Activated B cell treated with CpG ODN at 0.5 μM for 24 hours (primary cell): ENCODE measurements at regions of chr6 and their contacts with region 1.

Region 1: DNA sequence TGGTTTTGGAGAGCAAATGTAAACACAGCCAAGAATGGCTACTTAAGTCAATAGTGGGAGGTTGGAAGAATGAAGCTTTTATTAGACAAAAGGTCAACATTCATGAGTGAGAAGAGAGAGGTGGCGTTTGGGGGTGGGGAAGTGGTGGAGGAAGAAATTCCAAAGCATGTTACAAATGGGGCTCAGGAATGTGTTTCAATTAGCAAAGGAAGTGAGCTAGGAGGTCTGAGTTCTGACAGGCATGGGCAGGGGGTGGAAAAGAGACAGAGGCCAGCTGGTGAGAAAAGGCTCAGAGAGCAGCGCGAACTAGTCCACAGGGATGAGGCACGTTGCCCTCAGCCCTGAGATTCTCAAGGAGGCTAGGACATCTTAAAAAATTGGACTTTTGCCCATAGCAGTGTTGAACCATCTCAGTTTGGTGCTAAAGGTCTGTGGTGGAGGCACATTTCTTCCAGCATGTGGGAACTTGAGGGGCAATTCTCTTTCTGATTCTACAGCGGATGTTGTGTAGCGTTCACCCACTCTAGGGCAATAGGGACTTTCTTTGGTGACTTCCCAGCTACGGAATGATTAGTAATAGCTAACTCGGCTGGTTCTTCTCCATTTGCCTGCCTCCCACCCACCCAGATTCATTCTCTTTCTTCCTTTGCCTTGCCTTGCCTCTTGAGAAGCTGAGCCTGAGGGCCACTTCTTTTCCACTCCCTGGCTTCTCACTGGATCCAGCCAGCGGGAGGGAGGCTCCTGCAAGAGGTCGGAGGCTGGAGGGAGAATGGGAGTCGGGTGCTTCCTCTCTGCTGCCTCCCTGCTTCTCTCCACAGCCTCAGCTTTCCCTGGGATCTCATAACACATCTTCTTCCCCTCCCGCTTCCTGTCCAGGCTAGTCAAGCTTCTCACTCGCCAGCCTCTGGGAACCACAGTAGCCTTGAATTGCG is 45.1 kb upstream of the NEDD9 start:
- DNase-seq: no peak
- ATAC-seq: peak; percentile 69
- H3K4me3 Mint-ChIP-seq: peak overlapping the region; percentile 59
- H3K27ac Mint-ChIP-seq: peak overlapping the region; percentile 91
- H3K4me1 Mint-ChIP-seq: peaks cover 48% of the 10 kb centered on the region
- H3K27me3 Mint-ChIP-seq: no peaks in the 10 kb centered on the region
- CTCF ChIP-seq: no peak

Region 2: DNA sequence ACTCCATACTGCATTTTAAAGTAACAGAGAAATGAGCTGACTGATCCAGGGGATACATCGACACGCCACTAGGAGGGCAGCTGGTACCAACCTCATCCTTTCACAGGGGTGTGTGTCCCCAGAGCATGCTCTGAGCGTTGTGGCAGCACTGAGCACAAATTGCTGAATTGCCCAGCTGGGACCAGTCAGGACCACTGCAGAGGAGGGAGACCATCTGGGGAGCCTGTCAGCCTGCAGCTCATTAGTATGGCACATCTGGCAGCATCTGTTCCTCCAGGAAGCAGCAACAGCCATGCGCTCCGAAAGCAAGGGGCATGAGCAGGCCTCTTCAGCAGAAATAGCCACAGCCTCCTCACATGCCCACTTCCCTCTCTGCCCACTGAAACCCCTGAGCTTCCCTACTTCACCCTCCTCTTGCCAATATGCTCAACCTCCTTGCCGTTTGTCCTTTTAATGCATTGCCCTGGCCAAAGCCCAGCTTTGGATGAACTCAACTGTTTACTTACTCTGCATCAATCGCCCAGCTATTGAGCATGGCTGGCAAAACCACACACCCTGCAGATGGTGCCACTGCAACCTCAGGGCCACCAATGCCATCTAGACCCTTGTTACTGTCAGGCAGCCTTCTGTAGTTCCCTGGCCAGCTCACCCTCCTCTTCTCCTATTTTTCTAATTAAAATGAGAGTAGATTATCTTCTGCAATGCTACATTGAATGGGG is 32.6 kb after region 1 on chr6:
- CTCF ChIA-PET with region 1: interaction called, 3 read pairs
- POLR2A ChIA-PET with region 1: interaction called, 3 read pairs
- intact Hi-C with region 1: loop called (anchors 5 kb)
- DNase-seq: no peak
- ATAC-seq: no peak
- H3K4me3 Mint-ChIP-seq: no peak overlapping the region
- H3K27ac Mint-ChIP-seq: peak overlapping the region; percentile 19
- H3K4me1 Mint-ChIP-seq: peaks cover 30% of the 10 kb centered on the region
- H3K27me3 Mint-ChIP-seq: no peaks in the 10 kb centered on the region
- CTCF ChIP-seq: no peak